HepG2 (cell line): ENCODE measurements at regions of chr21 and their contacts with region 1.

Region 1: DNA sequence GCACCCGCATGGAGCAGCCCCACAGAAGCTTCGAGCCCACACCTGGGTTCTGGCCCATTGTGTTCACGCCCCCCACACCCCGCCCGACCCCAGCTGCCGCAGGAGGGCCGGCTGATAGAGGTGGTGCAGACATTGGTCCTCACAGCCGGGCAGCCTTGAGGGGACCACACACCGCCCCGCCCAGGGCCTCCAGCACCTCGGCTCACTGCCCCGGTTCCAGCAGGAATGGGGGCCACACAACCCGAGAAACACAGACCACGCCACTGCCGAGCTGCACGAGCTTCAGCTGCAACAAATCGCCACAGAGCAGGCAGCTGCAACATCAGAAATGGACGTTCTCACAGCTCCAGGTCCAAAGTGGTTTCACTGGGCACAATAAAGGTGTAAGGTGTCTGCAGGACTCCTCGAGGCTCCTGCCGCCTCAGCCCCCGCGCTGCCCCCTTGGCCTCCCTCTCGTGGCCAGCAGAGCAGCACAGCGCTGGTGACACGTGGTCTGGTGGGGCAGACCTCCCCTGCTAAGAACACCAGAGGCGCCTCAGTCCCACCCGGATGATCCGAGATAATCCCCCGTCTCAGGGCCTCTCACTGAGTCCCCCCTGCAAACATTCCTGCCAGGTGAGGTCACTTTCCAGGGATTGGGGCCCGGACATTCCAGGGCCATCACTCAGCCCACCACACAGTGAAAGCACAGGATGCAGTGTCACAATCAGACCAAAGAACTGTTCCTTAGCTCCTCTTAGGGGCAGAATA is 62.3 kb upstream of the ADARB1 start:
- DNase-seq: peak; percentile 95
- ATAC-seq: peak; percentile 79
- H3K4me3 ChIP-seq: peak overlapping the region in 2 of 3 experiments; percentile 38 to 65; a peak in 3 of 6 replicates
- H3K27ac ChIP-seq: peak overlapping the region; percentile 93
- H3K4me1 ChIP-seq: peaks cover 92% of the 10 kb centered on the region
- H3K27me3 ChIP-seq: peaks cover 0 to 24% of the 10 kb centered on the region in 2 experiments; a peak in 2 of 5 replicates
- CTCF ChIP-seq: peak; percentile 57
- EP300 ChIP-seq: peak in 1 of 2 experiments; percentile 89; a peak in 2 of 4 replicates
- POLR2A ChIP-seq: no peak
- RAD21 ChIP-seq: peak; percentile 41; the same call in 1 of the 2 replicates

Region 2: DNA sequence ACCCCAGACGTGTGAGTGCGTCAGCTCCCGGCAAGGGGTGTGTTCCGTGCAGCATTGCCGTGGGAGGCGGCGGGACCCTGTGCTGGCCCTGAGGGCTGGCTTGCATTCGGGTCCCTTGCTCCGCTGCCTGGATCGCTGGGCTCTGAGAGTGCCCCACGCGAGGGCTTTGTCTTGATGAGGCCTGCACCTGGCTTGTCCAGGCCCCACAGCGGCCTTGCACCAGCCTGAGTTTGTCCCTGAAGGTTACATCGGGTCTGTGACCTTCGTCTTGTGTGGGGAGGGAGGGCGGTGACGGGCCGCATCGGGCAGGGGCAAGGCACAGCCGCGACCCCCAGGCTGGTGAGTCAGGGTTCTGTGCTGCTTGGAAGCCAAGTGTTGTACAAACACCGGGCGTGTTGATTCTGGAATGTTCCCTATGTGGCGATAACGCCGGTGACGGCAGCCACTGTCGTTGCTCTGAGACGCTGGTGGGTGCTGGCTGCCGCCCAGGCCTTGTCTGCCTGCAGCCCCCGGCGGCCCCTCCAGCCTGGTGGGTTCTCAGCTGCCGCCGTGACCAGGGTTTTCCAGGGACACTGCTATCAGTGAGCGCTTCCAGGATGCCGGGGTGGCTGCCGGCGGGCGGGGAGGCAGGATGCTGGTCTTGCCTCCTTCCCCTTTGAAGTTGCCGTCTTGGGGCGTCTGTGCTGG is 29.4 kb before region 1 on chr21:
- CTCF ChIA-PET with region 1: no interaction called
- POLR2A ChIA-PET with region 1: interaction called, 141 read pairs
- in situ Hi-C with region 1: no loop called
- intact Hi-C with region 1: loop called (anchors 2 kb)
- DNase-seq: peak; percentile 80
- ATAC-seq: peak; percentile 4
- H3K4me3 ChIP-seq: peak overlapping the region in 1 of 3 experiments; percentile 76; a peak in 2 of 6 replicates
- H3K27ac ChIP-seq: peak overlapping the region; percentile 25
- H3K4me1 ChIP-seq: peaks cover 71% of the 10 kb centered on the region
- H3K27me3 ChIP-seq: peaks cover 2 to 5% of the 10 kb centered on the region in 2 experiments; a peak in 1 of 5 replicates
- CTCF ChIP-seq: no peak
- EP300 ChIP-seq: no peak
- POLR2A ChIP-seq: no peak
- RAD21 ChIP-seq: no peak

Region 3: GRCh38 chr21:44989537-44989886 is 22.6 kb before region 1 on chr21:
- CTCF ChIA-PET with region 1: no interaction called
- POLR2A ChIA-PET with region 1: interaction called, 141 read pairs
- in situ Hi-C with region 1: no loop called
- intact Hi-C with region 1: loop called (anchors 2 kb)
- DNase-seq: peak; percentile 31
- ATAC-seq: no peak
- H3K4me3 ChIP-seq: no peak overlapping the region
- H3K27ac ChIP-seq: no peak overlapping the region
- H3K4me1 ChIP-seq: peaks cover 69% of the 10 kb centered on the region
- H3K27me3 ChIP-seq: peaks cover 14 to 71% of the 10 kb centered on the region in 2 experiments
- CTCF ChIP-seq: no peak
- EP300 ChIP-seq: no peak
- POLR2A ChIP-seq: no peak
- RAD21 ChIP-seq: no peak

Region 4: GRCh38 chr21:44994695-44995342 is 17.3 kb before region 1 on chr21:
- CTCF ChIA-PET with region 1: no interaction called
- POLR2A ChIA-PET with region 1: interaction called, 20 read pairs
- in situ Hi-C with region 1: no loop called
- intact Hi-C with region 1: no loop called
- DNase-seq: no peak
- ATAC-seq: no peak
- H3K4me3 ChIP-seq: no peak overlapping the region
- H3K27ac ChIP-seq: no peak overlapping the region
- H3K4me1 ChIP-seq: peaks cover 56% of the 10 kb centered on the region
- H3K27me3 ChIP-seq: peaks cover 14 to 85% of the 10 kb centered on the region in 2 experiments
- CTCF ChIP-seq: no peak
- EP300 ChIP-seq: no peak
- POLR2A ChIP-seq: no peak
- RAD21 ChIP-seq: no peak

Region 5: GRCh38 chr21:45000977-45001728 is 10.9 kb before region 1 on chr21:
- CTCF ChIA-PET with region 1: no interaction called
- POLR2A ChIA-PET with region 1: interaction called, 20 read pairs
- in situ Hi-C with region 1: no loop called
- intact Hi-C with region 1: no loop called
- DNase-seq: no peak
- ATAC-seq: no peak
- H3K4me3 ChIP-seq: no peak overlapping the region
- H3K27ac ChIP-seq: no peak overlapping the region
- H3K4me1 ChIP-seq: peaks cover 51% of the 10 kb centered on the region
- H3K27me3 ChIP-seq: peaks cover 7 to 42% of the 10 kb centered on the region in 2 experiments
- CTCF ChIP-seq: no peak
- EP300 ChIP-seq: no peak
- POLR2A ChIP-seq: no peak
- RAD21 ChIP-seq: no peak

Region 6: DNA sequence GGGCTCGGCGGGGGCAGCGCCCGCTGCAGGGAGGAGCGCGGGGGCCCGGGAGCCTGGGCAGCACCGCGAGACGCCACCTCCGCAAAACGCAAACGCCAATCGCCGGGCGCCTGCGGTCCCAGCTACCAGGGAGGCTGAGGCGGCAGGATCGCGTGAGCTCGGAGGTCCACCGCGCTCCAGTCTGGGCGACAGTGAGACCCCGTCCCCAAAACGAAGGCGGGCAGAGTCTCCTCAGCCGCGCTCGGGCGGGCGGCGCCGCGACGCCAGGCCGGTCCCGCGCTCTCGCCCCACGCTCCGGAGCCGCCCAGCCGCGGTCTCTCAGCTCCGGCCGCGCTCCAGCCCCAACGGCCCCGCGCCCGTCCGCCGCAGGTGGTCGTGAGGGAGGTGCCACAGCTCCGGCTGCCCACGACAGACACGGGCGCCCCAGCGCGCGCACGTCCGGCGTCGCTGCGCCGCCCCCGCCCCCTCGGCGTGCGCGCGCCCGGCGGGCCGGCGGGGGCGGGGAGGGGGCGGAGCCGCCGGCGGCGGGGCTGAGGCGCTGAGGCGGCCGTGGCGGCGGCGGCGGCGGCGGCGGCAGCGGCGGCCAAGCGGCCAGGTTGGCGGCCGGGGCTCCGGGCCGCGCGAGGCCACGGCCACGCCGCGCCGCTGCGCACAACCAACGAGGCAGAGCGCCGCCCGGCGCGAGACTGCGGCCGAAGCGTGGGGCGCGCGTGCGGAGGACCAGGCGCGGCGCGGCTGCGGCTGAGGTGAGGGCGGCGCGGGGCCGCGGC is 62.1 kb after region 1 on chr21 and contains the start of gene ADARB1:
- CTCF ChIA-PET with region 1: no interaction called
- POLR2A ChIA-PET with region 1: interaction called, 29 read pairs
- in situ Hi-C with region 1: no loop called
- intact Hi-C with region 1: loop called (anchors 10 kb)
- DNase-seq: peak; percentile 32
- ATAC-seq: peak; percentile 67
- H3K4me3 ChIP-seq: peak within 1 kb of the TSS; percentile 76 to 95 (median 94)
- H3K27ac ChIP-seq: peak within 1 kb of the TSS; percentile 64
- H3K4me1 ChIP-seq: peaks cover 25% of the 10 kb centered on the region
- H3K27me3 ChIP-seq: peaks cover 0 to 7% of the 10 kb centered on the region in 2 experiments; a peak in 1 of 5 replicates
- CTCF ChIP-seq: no peak
- EP300 ChIP-seq: no peak
- POLR2A ChIP-seq: peak in 1 of 2 experiments; percentile 82; a peak in 2 of 4 replicates
- RAD21 ChIP-seq: peak; percentile 67
- total RNA-seq, gene ADARB1: 9.2 and 10.0 TPM in 2 replicates

Region 7: GRCh38 chr21:45140346-45140940 is 128.4 kb after region 1 on chr21:
- CTCF ChIA-PET with region 1: no interaction called
- POLR2A ChIA-PET with region 1: interaction called, 17 read pairs
- in situ Hi-C with region 1: no loop called
- intact Hi-C with region 1: no loop called
- DNase-seq: peak; percentile 86
- ATAC-seq: peak; percentile 96
- H3K4me3 ChIP-seq: no peak overlapping the region
- H3K27ac ChIP-seq: no peak overlapping the region
- H3K4me1 ChIP-seq: peaks cover 12% of the 10 kb centered on the region
- H3K27me3 ChIP-seq: no peaks in the 10 kb centered on the region
- CTCF ChIP-seq: peak; percentile 94
- EP300 ChIP-seq: no peak
- POLR2A ChIP-seq: no peak
- RAD21 ChIP-seq: peak; percentile 91

Region 8: DNA sequence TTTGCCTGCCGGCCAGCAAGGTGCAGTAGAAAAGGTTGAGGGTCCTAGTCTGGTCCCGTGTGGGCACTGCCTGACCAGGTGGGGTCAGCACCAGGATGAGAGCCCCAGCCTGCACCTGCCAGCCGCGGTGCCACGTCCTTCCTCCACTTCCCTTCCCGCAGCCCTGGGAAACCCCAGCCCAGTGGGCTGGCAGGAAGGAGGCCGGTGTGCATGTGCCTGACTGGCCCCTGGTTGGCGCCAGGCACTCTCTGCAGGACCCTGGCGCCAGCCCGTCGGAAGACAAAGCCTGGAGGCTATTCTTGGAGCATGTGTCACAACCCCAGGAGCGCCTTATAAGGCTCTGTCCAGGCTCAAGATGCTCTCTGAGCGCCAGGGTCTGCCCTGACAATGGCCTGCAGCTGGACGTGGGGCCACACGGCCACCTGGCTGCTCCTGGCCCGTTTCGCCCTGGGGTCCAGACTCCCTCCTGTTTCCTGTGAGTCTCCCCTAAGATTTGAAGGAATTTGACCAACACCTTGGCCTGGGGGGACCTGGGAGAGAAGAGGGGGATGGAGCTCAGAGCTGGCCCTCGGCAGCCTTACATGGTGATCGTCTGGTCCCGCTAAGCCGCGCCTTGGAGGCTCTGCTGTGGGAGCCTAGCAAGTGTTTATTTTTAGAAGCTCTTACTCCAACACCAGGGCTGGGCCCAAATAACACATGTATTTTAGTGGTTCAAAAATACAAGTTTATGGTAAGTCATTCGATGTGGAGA is 307.6 kb after region 1 on chr21:
- CTCF ChIA-PET with region 1: no interaction called
- POLR2A ChIA-PET with region 1: no interaction called
- in situ Hi-C with region 1: no loop called
- intact Hi-C with region 1: no loop called
- DNase-seq: no peak
- ATAC-seq: no peak
- H3K4me3 ChIP-seq: no peak overlapping the region
- H3K27ac ChIP-seq: peak overlapping the region; percentile 49
- H3K4me1 ChIP-seq: peaks cover 72% of the 10 kb centered on the region
- H3K27me3 ChIP-seq: no peaks in the 10 kb centered on the region
- CTCF ChIP-seq: no peak
- EP300 ChIP-seq: no peak
- POLR2A ChIP-seq: no peak
- RAD21 ChIP-seq: no peak